Cardiac septum (tissue), 1 donor: ENCODE measurements at regions of chr9 and their contacts with region 1.

Region 1: DNA sequence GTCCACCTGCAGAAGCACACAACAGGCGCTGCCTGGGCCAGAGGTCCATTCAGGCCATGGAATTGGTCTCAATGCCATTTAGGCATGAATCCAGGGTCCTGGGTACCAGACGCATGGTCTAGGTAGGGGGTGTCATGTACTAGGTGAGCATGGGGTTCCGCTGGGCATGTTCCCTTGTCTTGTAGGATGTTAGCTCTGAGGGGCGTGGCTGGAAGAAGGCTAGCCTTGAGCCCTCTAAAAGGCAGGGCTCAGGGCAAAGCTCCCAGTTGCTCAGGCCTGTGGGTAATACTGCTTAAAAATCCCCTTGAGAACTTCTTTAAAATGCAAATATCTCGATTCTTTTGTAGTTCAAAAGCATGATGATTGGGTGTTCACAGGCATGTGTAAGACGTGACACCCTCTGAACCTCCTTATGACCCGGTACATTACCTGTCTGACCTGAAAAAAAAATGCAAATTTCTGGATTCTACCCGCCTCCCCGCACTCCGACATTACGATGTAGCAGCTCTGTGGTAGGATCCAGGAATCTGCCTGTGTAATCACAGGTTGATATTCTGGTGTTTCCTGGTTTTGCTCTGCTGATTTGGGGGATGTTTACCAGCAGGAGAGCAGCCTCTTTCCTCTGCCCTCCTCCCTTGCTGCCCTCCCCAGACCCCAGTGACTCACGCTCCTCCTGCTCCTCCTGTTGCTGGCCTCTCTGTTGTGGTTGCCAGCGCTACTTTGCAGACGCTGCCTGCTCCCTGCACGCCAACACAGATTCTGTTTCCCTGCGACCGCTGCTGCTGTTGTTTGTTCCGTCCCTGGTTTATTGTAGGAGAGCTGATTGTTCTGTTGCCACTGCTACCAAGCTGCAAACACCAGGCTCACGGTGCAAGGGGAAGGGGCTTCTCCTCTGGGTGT is 5.7 kb downstream of the TMC1 start:
- DNase-seq: no peak

Region 2: DNA sequence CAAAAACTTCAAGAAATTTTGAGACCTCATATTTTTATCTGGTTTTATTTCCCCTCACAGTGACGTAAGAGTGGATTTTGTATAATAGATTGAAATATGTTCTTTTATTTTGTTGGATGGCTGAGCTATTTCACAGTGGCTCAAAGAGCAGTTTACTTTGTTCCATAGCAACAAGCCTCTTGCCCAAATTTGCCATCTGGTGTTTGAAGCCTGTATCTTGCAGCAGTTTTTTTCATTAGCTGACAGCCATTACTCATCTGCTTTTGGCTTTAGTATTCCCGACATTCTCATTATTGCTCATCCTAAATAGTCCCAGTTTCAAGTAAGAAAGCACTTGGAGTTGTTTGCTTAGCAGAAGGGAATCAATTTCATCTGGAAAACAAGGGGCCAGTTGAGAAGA is 341.6 kb before region 1 on chr9:
- intact Hi-C with region 1: no loop called
- DNase-seq: no peak

Region 3: GRCh38 chr9:72473474-72474261 is 53.5 kb before region 1 on chr9:
- intact Hi-C with region 1: loop called (anchors 10 kb)
- DNase-seq: no peak

Region 4: GRCh38 chr9:72577212-72577753 is 50.1 kb after region 1 on chr9:
- intact Hi-C with region 1: loop called (anchors 5 kb)
- DNase-seq: no peak

Region 5: GRCh38 chr9:72788966-72789735 is 262.0 kb after region 1 on chr9:
- intact Hi-C with region 1: no loop called
- DNase-seq: no peak